ENCODE measurements at regions of chr1 and their contacts with region 1.

Region 1: DNA sequence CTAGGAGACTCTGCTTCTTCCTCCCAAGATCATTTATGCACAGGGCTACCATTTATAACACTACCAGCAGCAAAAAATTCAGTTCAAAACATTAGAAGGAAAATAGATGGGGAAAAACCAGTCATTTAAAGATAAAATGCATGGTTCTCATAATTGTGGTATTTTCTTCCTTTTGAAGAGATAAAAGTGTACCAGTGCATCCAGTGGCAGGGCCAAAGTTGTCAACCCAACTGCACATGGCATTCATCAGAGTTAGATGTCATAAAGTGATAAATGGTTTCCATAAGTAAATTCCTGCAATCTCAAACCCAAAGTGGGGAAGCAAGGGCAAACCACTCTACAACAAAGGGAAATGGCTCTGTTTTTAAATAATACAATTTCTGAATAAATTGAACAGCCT is 119.1 kb upstream of the DMRTA2 start:
- DNase-seq: no peak
- H3K4me3 ChIP-seq: no peak overlapping the region
- H3K4me3 Mint-ChIP-seq: no peak overlapping the region
- H3K27ac Mint-ChIP-seq: no peak overlapping the region
- H3K4me1 ChIP-seq: no peaks in the 10 kb centered on the region
- H3K4me1 Mint-ChIP-seq: no peaks in the 10 kb centered on the region
- H3K27me3 ChIP-seq: no peaks in the 10 kb centered on the region
- H3K27me3 Mint-ChIP-seq: no peaks in the 10 kb centered on the region
- CTCF ChIP-seq: no peak

Region 2: GRCh38 chr1:50393522-50394120 is 148.7 kb before region 1 on chr1:
- CTCF ChIA-PET with region 1: no interaction called
- POLR2A ChIA-PET with region 1: no interaction called
- intact Hi-C with region 1: no loop called
- DNase-seq: no peak
- H3K4me3 ChIP-seq: no peak overlapping the region
- H3K4me3 Mint-ChIP-seq: no peak overlapping the region
- H3K27ac Mint-ChIP-seq: no peak overlapping the region
- H3K4me1 ChIP-seq: no peaks in the 10 kb centered on the region
- H3K4me1 Mint-ChIP-seq: no peaks in the 10 kb centered on the region
- H3K27me3 ChIP-seq: no peaks in the 10 kb centered on the region
- H3K27me3 Mint-ChIP-seq: peaks cover 6% of the 10 kb centered on the region
- CTCF ChIP-seq: no peak

Region 3: GRCh38 chr1:50422946-50423669 is 119.3 kb before region 1 on chr1 and contains the start of gene DMRTA2:
- CTCF ChIA-PET with region 1: no interaction called
- POLR2A ChIA-PET with region 1: no interaction called
- intact Hi-C with region 1: loop called (anchors 10 kb)
- DNase-seq: peak; percentile 71 to 74
- H3K4me3 ChIP-seq: peak within 1 kb of the TSS; percentile 53
- H3K4me3 Mint-ChIP-seq: peak within 1 kb of the TSS; percentile 72
- H3K27ac Mint-ChIP-seq: peak within 1 kb of the TSS; percentile 91
- H3K4me1 ChIP-seq: no peaks in the 10 kb centered on the region
- H3K4me1 Mint-ChIP-seq: peaks cover 6% of the 10 kb centered on the region
- H3K27me3 ChIP-seq: peaks cover 3% of the 10 kb centered on the region; the same call in 1 of the 2 replicates
- H3K27me3 Mint-ChIP-seq: peaks cover 21% of the 10 kb centered on the region
- CTCF ChIP-seq: no peak
- total RNA-seq, gene DMRTA2: 3.1 and 3.4 TPM in 2 replicates